CD4-positive, alpha-beta memory T cell (primary cell): ENCODE measurements at regions of chr13 and their contacts with region 1.

Region 1: DNA sequence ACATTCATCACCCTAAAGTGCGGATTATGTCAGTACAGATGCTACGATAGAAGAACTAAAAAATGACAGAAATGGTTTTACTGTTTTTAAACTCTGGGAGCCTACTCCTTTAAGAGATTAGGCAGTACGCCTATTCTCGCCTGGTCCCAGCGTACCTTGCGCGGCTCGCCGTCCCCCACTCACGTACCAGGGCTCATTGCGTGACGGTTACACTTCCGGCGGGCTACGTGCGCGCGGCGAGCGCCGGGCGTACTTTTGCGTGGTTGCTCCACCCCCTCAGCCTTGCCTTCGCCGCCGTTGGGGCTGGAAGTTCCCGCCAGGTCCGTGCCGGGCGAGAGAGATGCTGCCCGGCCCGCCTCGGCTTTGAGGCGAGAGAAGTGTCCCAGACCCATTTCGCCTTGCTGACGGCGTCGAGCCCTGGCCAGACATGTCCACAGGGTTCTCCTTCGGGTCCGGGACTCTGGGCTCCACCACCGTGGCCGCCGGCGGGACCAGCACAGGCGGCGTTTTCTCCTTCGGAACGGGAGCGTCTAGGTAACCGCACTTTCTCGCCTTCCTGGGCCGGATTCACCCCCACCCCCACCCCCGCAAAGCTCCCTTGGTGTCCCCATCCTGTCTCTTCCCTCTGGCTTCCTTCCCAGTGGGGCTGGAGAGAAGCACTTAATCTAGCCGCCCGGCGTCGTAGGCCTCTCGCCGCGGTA is at the start of gene NUP58:
- DNase-seq: peak; percentile 92 to 96 (median 93)
- H3K4me3 ChIP-seq: peak within 1 kb of the TSS; percentile 86 to 93
- H3K4me3 Mint-ChIP-seq: peak within 1 kb of the TSS; percentile 91 to 97 (median 92)
- H3K27ac ChIP-seq: peak within 1 kb of the TSS; percentile 96
- H3K27ac Mint-ChIP-seq: peak within 1 kb of the TSS; percentile 93 to 97 (median 97)
- H3K4me1 ChIP-seq: peaks cover 27% of the 10 kb centered on the region
- H3K4me1 Mint-ChIP-seq: peaks cover 19 to 50% (median 37%) of the 10 kb centered on the region in 4 donors
- H3K27me3 ChIP-seq: peaks cover 5% of the 10 kb centered on the region
- H3K27me3 Mint-ChIP-seq: peaks cover 3 to 6% of the 10 kb centered on the region in 2 donors
- total RNA-seq, gene NUP58: 42.9 to 43.3 TPM

Region 2: DNA sequence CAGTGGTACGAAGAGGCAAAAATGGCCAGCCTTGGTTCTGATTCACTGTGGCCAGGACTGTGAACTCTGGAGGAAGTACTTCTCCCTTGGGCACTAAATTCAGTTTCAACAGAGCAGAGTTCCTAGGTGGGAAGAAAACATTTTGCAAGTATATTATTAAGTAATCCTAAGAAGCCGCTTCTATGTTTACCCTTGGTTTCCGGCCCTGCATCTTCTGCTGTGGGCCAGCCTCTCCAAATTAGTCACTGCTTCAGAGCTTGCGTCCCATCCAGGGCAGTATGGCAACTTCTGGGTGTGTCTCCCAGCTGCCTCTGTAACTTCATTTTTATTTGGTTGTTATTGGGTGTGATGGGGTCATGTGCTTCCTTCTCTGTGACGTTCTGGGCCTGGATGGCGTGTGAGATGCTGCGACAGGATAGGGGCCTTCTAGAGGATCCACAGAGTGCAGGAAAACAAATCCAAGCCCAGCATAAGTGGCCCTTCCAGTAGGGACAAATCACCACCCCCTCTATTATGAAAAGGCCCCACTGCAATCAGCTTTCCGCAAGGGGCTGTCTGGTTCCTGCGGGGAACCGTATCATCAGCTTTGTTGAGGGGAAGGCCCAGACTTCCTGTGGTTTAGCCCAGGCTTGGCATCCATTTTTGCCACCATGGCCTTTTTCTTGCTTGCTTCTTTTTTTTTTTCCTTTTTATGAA is 1047.2 kb before region 1 on chr13:
- CTCF ChIA-PET with region 1: no interaction called
- POLR2A ChIA-PET with region 1: no interaction called
- intact Hi-C with region 1: loop called (anchors 5 kb)
- DNase-seq: peak; percentile 78 to 93 (median 83)
- H3K4me3 ChIP-seq: peak overlapping the region; percentile 94 to 98
- H3K4me3 Mint-ChIP-seq: peak overlapping the region; percentile 92 to 99 (median 97)
- H3K27ac ChIP-seq: peak overlapping the region; percentile 87
- H3K27ac Mint-ChIP-seq: peak overlapping the region; percentile 95 to 100 (median 97)
- H3K4me1 ChIP-seq: peaks cover 88% of the 10 kb centered on the region
- H3K4me1 Mint-ChIP-seq: peaks cover 62 to 99% (median 81%) of the 10 kb centered on the region in 4 donors
- H3K27me3 ChIP-seq: no peaks in the 10 kb centered on the region
- H3K27me3 Mint-ChIP-seq: no peaks in the 10 kb centered on the region

Region 3: DNA sequence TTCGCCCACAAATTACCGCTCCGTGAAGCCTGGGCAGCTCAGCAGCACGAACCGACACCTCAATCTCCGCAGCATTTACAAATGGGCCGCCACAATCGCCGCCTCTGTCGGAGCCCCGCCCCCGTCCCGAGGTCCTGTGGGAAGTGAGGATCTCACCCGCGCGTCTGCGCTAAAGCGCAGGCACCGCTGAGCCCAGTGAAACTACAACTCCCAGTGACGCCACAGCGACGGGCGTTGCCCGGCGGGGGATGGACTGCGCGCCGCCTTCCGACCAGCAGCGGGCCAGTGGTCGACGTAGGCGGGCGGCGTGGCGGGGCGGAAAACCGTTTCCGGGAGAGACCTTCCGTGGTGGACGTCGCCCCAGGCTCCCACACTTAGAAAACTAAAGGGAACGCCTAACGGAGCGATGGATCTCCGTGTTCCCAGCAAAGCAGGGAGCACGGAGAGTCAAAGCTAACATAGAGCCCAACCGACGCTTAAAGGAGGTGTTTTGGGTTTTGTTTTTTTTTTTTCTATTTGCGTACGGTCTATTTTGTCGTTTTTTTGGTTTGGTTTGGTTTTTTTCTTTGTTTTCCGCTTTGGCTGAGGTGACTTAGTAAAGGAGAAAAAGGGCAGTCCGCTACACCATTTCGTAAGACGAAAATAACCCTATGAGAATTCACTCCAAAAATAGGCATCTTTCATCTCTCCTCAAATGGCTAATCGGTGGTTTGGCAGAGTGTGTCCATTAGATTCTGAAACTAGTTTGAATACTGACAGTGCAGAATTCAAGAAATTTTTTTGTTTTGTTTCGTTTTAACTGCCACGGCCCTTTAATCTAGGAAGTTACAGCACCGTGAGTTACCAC is 378.5 kb before region 1 on chr13:
- CTCF ChIA-PET with region 1: no interaction called
- POLR2A ChIA-PET with region 1: no interaction called
- intact Hi-C with region 1: loop called (anchors 1 kb)
- DNase-seq: peak; percentile 89 to 94 (median 91)
- H3K4me3 ChIP-seq: peak overlapping the region; percentile 64 to 95
- H3K4me3 Mint-ChIP-seq: peak overlapping the region; percentile 91 to 99 (median 97)
- H3K27ac ChIP-seq: peak overlapping the region; percentile 76
- H3K27ac Mint-ChIP-seq: peak overlapping the region; percentile 90 to 99 (median 96)
- H3K4me1 ChIP-seq: peaks cover 11% of the 10 kb centered on the region
- H3K4me1 Mint-ChIP-seq: peaks cover 9 to 17% (median 12%) of the 10 kb centered on the region in 4 donors
- H3K27me3 ChIP-seq: no peaks in the 10 kb centered on the region
- H3K27me3 Mint-ChIP-seq: no peaks in the 10 kb centered on the region

Region 4: GRCh38 chr13:25286969-25287961 is 14.2 kb before region 1 on chr13 and contains the start of gene MTMR6:
- CTCF ChIA-PET with region 1: interaction called, 21 read pairs
- POLR2A ChIA-PET with region 1: interaction called, 20 read pairs
- intact Hi-C with region 1: loop called (anchors 1 kb)
- DNase-seq: peak; percentile 92 to 96 (median 94)
- H3K4me3 ChIP-seq: peak within 1 kb of the TSS; percentile 91 to 92
- H3K4me3 Mint-ChIP-seq: peak within 1 kb of the TSS; percentile 94 to 100 (median 98)
- H3K27ac ChIP-seq: peak within 1 kb of the TSS; percentile 100
- H3K27ac Mint-ChIP-seq: peak within 1 kb of the TSS; percentile 97 to 100 (median 98)
- H3K4me1 ChIP-seq: peaks cover 40% of the 10 kb centered on the region
- H3K4me1 Mint-ChIP-seq: peaks cover 36 to 58% (median 46%) of the 10 kb centered on the region in 4 donors
- H3K27me3 ChIP-seq: no peaks in the 10 kb centered on the region
- H3K27me3 Mint-ChIP-seq: peaks cover 4 to 8% of the 10 kb centered on the region in 2 donors
- total RNA-seq, gene MTMR6: 18.9 to 19.1 TPM

Region 5: DNA sequence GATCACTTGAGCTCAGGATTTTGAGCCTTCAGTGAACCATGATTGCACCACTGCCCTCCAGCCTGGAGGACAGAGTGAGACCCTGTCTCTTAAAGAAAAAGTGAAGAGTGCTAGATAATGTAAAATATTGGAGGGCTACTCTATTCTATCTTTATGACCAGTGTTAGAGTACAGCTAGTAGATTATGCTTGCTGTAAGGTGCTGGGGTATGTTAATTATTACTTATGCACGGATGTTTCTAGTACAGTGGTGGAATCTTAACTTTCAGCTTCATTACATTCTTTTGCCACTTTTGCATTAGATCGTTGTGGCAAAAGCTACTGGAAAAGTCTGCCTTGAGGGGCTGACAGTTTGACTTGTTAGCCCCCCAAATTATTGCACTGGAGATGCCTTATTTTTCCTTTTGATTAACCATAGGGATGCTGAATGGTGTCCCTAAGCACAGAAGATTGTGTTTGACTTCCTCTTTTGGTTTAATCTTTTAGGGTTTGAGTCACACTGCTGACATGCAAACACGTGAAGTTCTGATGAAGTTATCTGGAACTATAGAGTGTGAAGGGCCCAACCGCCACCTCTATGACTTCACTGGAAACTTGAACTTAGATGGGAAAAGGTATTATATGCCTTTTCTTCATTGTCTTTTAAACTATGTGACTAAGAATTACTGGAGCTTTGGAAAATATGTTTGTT is 240.1 kb after region 1 on chr13:
- CTCF ChIA-PET with region 1: no interaction called
- POLR2A ChIA-PET with region 1: no interaction called
- intact Hi-C with region 1: no loop called
- DNase-seq: no peak
- H3K4me3 ChIP-seq: no peak overlapping the region
- H3K4me3 Mint-ChIP-seq: no peak overlapping the region
- H3K27ac ChIP-seq: no peak overlapping the region
- H3K27ac Mint-ChIP-seq: no peak overlapping the region
- H3K4me1 ChIP-seq: no peaks in the 10 kb centered on the region
- H3K4me1 Mint-ChIP-seq: no peaks in the 10 kb centered on the region
- H3K27me3 ChIP-seq: no peaks in the 10 kb centered on the region
- H3K27me3 Mint-ChIP-seq: peaks cover 6 to 9% of the 10 kb centered on the region in 2 donors

Region 6: DNA sequence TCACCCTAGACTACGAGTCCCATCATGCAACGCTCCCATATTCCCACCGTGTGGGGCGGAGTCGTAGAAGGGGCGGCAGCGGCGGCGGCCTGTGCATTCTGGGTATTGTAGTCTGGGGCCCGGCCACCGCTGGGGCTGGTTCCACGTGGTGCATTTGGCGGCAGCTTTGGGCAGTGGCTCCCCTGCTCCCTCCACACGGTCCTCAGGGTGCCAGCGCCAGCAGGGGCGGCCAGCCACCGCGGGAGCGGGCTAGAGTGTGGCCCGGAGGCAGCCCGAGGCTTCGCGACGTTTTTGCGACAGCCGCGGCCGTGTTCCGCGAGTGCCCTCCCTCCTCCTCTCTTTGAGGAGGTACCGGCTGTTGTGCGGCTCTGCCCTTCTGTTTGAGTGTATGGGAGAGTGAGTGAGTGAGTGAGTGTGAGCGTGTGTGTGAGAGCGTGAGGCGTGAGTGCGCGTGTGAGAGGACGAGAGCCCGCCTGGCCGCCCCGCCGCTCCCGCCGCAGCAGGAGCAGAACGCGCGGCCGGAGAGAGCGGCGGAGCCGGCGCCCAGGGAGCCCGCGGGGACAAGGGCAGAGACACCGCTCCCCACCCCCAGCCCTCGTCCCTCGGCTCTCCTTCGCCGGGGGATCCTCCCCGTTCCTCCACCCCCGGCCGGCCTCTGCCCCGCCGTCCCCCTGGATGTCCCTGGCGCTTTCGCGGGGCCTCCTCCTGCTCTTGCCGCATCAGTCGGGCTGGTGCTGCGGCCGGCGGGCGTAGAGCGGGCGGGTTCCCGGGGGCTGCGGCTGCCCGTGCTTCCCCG is 952.5 kb after region 1 on chr13 and contains the start of gene CDK8:
- CTCF ChIA-PET with region 1: no interaction called
- POLR2A ChIA-PET with region 1: no interaction called
- intact Hi-C with region 1: loop called (anchors 5 kb)
- DNase-seq: peak; percentile 91 to 95 (median 92)
- H3K4me3 ChIP-seq: peak within 1 kb of the TSS; percentile 55 to 87
- H3K4me3 Mint-ChIP-seq: peak within 1 kb of the TSS; percentile 91 to 100 (median 94)
- H3K27ac ChIP-seq: peak within 1 kb of the TSS; percentile 58
- H3K27ac Mint-ChIP-seq: peak within 1 kb of the TSS; percentile 86 to 99 (median 93)
- H3K4me1 ChIP-seq: peaks cover 18% of the 10 kb centered on the region
- H3K4me1 Mint-ChIP-seq: peaks cover 29 to 44% (median 30%) of the 10 kb centered on the region in 4 donors
- H3K27me3 ChIP-seq: no peaks in the 10 kb centered on the region
- H3K27me3 Mint-ChIP-seq: peaks cover 0 to 1% of the 10 kb centered on the region in 2 donors
- total RNA-seq, gene CDK8: 10.4 to 11.7 TPM